ENCODE measurements at regions of chr6 and their contacts with region 1.

Region 1: DNA sequence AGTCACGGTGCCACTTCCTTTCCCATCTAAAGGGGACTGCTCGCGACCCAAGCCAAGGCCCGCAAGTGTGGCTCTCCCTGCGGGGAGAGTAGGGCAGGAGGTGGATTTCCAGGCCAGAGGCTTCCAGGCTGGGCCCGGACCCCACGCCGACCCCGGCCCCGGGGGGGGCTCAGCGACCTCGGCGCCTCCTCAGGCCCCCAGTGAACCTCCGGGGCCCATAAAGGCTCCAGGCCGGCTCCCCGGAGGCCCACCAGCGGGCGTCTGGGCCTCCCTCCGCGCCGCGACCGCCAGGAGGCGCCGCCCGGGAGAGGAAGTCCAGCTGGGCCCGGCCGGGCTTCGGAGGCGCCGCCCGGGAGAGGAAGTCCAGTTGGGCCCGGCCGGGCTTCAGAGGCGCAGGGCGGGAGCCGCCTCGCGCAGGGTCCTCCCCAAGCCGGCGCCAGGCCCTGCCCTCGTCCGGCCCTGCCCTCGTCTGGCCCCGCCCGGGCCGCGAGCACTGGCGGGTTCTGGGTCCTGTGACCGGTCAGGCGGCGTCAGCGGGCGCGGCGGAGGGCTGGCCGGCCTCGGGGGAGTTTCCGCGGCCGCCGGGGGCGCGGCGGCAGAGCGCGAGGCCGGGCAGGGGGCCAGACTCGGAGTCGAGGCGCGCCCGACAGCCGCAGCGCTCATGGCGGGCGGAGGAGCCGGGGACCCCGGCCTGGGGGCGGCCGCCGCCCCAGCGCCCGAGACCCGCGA is at the start of gene RAB32:
- DNase-seq: peak; percentile 86 to 94
- H3K4me3 ChIP-seq: peak within 1 kb of the TSS; percentile 87
- H3K4me3 Mint-ChIP-seq: peak within 1 kb of the TSS; percentile 93
- H3K27ac Mint-ChIP-seq: peak within 1 kb of the TSS; percentile 91
- H3K4me1 ChIP-seq: peaks cover 8% of the 10 kb centered on the region
- H3K4me1 Mint-ChIP-seq: no peaks in the 10 kb centered on the region
- H3K27me3 ChIP-seq: no peaks in the 10 kb centered on the region
- H3K27me3 Mint-ChIP-seq: no peaks in the 10 kb centered on the region
- CTCF ChIP-seq: peak; percentile 55 to 60
- total RNA-seq, gene RAB32: 9.0 and 11.8 TPM in 2 replicates

Region 2: DNA sequence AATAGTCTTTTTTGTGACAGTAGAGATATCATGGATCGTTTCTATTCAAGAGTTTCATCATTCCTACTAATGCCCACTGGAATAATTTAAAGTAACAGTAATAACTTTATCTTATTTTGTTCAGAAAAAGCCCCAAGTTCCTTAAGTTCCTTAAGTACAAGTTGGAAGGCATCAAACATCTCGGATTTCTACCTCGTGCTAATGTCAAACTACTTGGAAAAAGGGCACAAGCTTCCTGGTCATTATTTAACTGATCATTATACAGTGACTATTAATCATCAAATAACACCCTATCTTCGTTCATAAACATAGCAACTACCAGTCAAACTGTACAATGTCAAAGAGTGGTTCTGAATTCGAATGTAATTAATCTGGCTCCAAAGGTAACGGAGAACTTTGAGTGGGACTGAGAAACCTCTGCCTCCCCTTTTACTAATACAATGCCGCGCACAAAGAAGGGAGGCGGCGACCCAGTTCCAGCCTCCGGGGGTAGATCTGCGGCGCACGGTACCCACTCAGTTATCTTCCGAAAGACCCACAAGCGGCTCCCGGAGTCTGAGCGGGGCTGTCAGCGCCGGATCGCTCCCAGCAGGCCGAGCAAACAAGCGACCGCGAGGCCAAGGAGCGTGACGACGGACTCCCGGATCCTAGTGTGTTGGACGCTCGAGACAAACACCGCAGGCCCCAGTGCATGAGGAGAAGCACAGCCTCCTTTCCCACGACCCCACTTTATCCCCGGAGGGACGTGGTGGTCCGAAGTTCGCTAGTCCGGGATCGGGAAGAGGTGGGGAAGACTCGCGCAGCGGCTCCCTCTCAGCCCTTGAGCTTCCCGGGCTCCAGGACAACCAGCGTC is 579.9 kb before region 1 on chr6:
- CTCF ChIA-PET with region 1: no interaction called
- POLR2A ChIA-PET with region 1: interaction called, 3 read pairs
- intact Hi-C with region 1: loop called (anchors 10 kb)
- DNase-seq: peak in 1 of 2 experiments; percentile 59
- H3K4me3 ChIP-seq: peak overlapping the region; percentile 59
- H3K4me3 Mint-ChIP-seq: peak overlapping the region; percentile 95
- H3K27ac Mint-ChIP-seq: peak overlapping the region; percentile 92
- H3K4me1 ChIP-seq: peaks cover 22% of the 10 kb centered on the region
- H3K4me1 Mint-ChIP-seq: peaks cover 13% of the 10 kb centered on the region
- H3K27me3 ChIP-seq: no peaks in the 10 kb centered on the region
- H3K27me3 Mint-ChIP-seq: no peaks in the 10 kb centered on the region
- CTCF ChIP-seq: no peak

Region 3: DNA sequence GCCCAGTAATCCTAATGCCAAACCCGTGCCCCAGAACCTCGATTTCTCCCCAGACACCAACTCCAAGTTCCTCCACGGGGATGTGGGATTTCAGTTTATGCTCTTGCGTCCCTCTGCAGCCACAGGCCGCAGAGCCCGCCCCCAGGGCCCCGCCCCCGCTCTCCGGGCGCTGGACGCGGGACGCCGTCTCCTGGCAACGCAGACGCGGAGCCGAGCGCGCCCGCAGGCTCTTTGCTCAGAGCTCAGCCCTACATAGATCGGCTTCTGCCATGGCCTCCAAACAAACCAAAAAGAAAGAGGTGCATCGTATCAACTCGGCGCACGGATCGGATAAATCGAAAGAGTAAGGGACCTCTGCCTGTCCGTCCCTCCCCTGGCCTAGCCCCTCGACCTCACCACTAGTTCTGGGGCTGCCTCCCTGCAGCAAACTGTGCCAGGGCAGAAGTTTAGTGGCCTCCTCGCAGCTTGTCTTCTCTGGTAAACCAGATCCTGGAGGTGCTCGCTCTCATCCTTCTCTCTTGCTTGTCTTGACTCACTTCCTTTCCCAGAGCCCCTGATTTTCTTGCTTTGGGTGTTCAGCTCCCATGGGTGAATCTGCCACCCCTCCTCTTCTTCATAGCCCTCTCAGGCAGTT is 55.5 kb after region 1 on chr6 and contains the start of gene ADGB:
- CTCF ChIA-PET with region 1: no interaction called
- POLR2A ChIA-PET with region 1: no interaction called
- intact Hi-C with region 1: loop called (anchors 5 kb)
- DNase-seq: peak; percentile 51 to 75
- H3K4me3 ChIP-seq: peak within 1 kb of the TSS; percentile 33
- H3K4me3 Mint-ChIP-seq: peak within 1 kb of the TSS; percentile 58
- H3K27ac Mint-ChIP-seq: peak within 1 kb of the TSS; percentile 16
- H3K4me1 ChIP-seq: no peaks in the 10 kb centered on the region
- H3K4me1 Mint-ChIP-seq: peaks cover 12% of the 10 kb centered on the region
- H3K27me3 ChIP-seq: no peaks in the 10 kb centered on the region
- H3K27me3 Mint-ChIP-seq: peaks cover 17% of the 10 kb centered on the region
- CTCF ChIP-seq: no peak
- total RNA-seq, gene ADGB: not detected in 2 replicates